BJ (cell line): ENCODE measurements at regions of chr2 and their contacts with region 1.

Region 1: DNA sequence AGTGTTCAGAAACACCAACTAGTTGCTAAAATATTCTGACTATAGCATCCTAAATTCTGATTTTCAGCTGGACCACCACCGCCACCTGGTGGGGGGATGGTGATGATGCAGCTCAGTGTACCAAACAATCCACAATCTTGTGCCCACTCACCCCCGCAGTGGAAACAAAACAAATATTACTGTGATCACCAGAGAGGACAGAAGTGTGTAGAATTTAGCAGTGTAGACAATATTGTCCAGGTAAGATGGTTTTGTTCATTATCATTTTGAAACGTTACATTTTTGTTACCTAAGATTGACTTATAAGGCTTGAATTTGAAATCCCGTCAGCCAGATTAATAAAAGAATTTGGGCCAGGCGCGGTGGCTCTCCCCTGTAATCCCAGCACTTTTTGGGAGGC is 31.7 kb upstream of the UBXN4 start:
- DNase-seq: no peak
- H3K4me3 ChIP-seq: no peak overlapping the region
- H3K27me3 ChIP-seq: no peaks in the 10 kb centered on the region
- CTCF ChIP-seq: peak; percentile 92

Region 2: GRCh38 chr2:134988994-134989605 is 720.9 kb before region 1 on chr2:
- CTCF ChIA-PET with region 1: interaction called, 14 read pairs
- POLR2A ChIA-PET with region 1: no interaction called
- DNase-seq: no peak
- H3K4me3 ChIP-seq: no peak overlapping the region
- H3K27me3 ChIP-seq: peaks cover 3% of the 10 kb centered on the region; the same call in 1 of the 2 replicates
- CTCF ChIP-seq: peak; percentile 43

Region 3: DNA sequence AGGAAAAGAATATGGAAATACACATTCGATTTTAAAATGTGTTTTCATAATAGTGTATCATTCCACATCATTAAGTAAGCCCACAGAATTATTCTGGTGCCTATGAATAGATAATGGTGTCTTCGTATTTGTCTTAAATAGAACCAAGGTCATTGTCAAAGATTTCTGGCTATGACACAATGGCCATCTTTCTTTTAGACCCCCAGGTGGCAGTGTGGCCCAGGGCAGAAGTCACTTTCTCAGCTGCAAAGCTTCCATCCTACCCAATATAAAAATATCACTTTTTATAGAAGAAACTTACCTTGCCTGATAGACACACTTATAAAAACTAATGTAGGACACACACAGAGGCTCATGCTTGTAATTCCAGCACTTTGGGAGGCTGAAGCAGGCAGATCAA is 236.4 kb before region 1 on chr2:
- CTCF ChIA-PET with region 1: interaction called, 21 read pairs
- POLR2A ChIA-PET with region 1: no interaction called
- DNase-seq: no peak
- H3K4me3 ChIP-seq: no peak overlapping the region
- H3K27me3 ChIP-seq: no peaks in the 10 kb centered on the region
- CTCF ChIP-seq: peak; percentile 48